CD4-positive, alpha-beta T cell (primary cell): ENCODE measurements at regions of chr1 and their contacts with region 1.

Region 1: DNA sequence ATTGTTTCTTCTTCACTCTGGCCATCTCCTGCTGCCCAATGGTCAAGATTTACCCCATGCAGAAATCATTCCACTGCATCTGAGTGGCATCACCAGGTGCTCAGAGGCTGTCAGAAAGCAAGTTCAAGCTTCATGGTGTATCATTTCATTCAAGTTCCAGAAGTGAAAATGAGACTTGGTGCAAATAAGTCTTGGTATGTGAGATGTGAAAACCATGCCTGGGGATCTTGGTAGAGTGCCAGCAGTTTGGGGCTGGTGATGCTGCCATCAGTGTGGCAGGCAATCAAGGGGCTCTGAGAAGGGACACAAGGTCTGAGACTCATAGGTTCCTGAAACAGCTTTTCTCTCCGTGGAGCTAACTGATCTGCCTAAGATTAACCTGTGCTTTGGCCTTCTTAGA is 52.0 kb downstream of the CD2 start:
- DNase-seq: peak in 11 of 14 experiments; percentile 29 to 79 (median 48)
- ATAC-seq: peak; percentile 27
- H3K4me3 ChIP-seq: peak overlapping the region; percentile 9
- H3K4me3 Mint-ChIP-seq: peak overlapping the region; percentile 64
- H3K27ac ChIP-seq: peak overlapping the region; percentile 11 to 80
- H3K27ac Mint-ChIP-seq: peak overlapping the region; percentile 93
- H3K4me1 ChIP-seq: peaks cover 78% of the 10 kb centered on the region
- H3K4me1 Mint-ChIP-seq: peaks cover 90% of the 10 kb centered on the region
- H3K27me3 ChIP-seq: no peaks in the 10 kb centered on the region
- H3K27me3 Mint-ChIP-seq: no peaks in the 10 kb centered on the region
- CTCF ChIP-seq: no peak

Region 2: GRCh38 chr1:116433275-116434257 is 372.7 kb before region 1 on chr1:
- CTCF ChIA-PET with region 1: no interaction called
- POLR2A ChIA-PET with region 1: no interaction called
- intact Hi-C with region 1: no loop called
- DNase-seq: no peak
- ATAC-seq: no peak
- H3K4me3 ChIP-seq: no peak overlapping the region
- H3K4me3 Mint-ChIP-seq: no peak overlapping the region
- H3K27ac ChIP-seq: no peak overlapping the region
- H3K27ac Mint-ChIP-seq: no peak overlapping the region
- H3K4me1 ChIP-seq: no peaks in the 10 kb centered on the region
- H3K4me1 Mint-ChIP-seq: no peaks in the 10 kb centered on the region
- H3K27me3 ChIP-seq: no peaks in the 10 kb centered on the region
- H3K27me3 Mint-ChIP-seq: no peaks in the 10 kb centered on the region
- CTCF ChIP-seq: no peak

Region 3: GRCh38 chr1:116754198-116754977 is 51.9 kb before region 1 on chr1 and contains the start of gene CD2:
- CTCF ChIA-PET with region 1: interaction called, 3 read pairs
- POLR2A ChIA-PET with region 1: interaction called, 15 read pairs
- intact Hi-C with region 1: no loop called
- DNase-seq: peak in 11 of 14 experiments; percentile 47 to 82 (median 60)
- ATAC-seq: peak; percentile 86
- H3K4me3 ChIP-seq: peak within 1 kb of the TSS; percentile 78
- H3K4me3 Mint-ChIP-seq: peak within 1 kb of the TSS; percentile 97
- H3K27ac ChIP-seq: peak within 1 kb of the TSS; percentile 81 to 82
- H3K27ac Mint-ChIP-seq: peak within 1 kb of the TSS; percentile 99
- H3K4me1 ChIP-seq: peaks cover 19% of the 10 kb centered on the region
- H3K4me1 Mint-ChIP-seq: peaks cover 59% of the 10 kb centered on the region
- H3K27me3 ChIP-seq: no peaks in the 10 kb centered on the region
- H3K27me3 Mint-ChIP-seq: no peaks in the 10 kb centered on the region
- CTCF ChIP-seq: peak; percentile 13
- total RNA-seq, gene CD2: 150 to 151 TPM

Region 4: GRCh38 chr1:116763787-116764465 is 42.3 kb before region 1 on chr1:
- CTCF ChIA-PET with region 1: interaction called, 16 read pairs
- POLR2A ChIA-PET with region 1: interaction called, 290 read pairs
- intact Hi-C with region 1: no loop called
- DNase-seq: peak in 6 of 14 experiments; percentile 20 to 74 (median 52)
- ATAC-seq: peak; percentile 18
- H3K4me3 ChIP-seq: peak overlapping the region; percentile 31
- H3K4me3 Mint-ChIP-seq: peak overlapping the region; percentile 83
- H3K27ac ChIP-seq: peak overlapping the region; percentile 88 to 89
- H3K27ac Mint-ChIP-seq: peak overlapping the region; percentile 99
- H3K4me1 ChIP-seq: peaks cover 96% of the 10 kb centered on the region
- H3K4me1 Mint-ChIP-seq: peaks cover 97% of the 10 kb centered on the region
- H3K27me3 ChIP-seq: no peaks in the 10 kb centered on the region
- H3K27me3 Mint-ChIP-seq: no peaks in the 10 kb centered on the region
- CTCF ChIP-seq: peak; percentile 52

Region 5: GRCh38 chr1:117572546-117572945 is 766.3 kb after region 1 on chr1:
- CTCF ChIA-PET with region 1: no interaction called
- POLR2A ChIA-PET with region 1: no interaction called
- intact Hi-C with region 1: no loop called
- DNase-seq: peak in 12 of 14 experiments; percentile 7 to 53 (median 36)
- ATAC-seq: peak; percentile 77
- H3K4me3 ChIP-seq: no peak overlapping the region
- H3K4me3 Mint-ChIP-seq: peak overlapping the region; percentile 14
- H3K27ac ChIP-seq: no peak overlapping the region
- H3K27ac Mint-ChIP-seq: no peak overlapping the region
- H3K4me1 ChIP-seq: peaks cover 23% of the 10 kb centered on the region
- H3K4me1 Mint-ChIP-seq: peaks cover 30% of the 10 kb centered on the region
- H3K27me3 ChIP-seq: no peaks in the 10 kb centered on the region
- H3K27me3 Mint-ChIP-seq: no peaks in the 10 kb centered on the region
- CTCF ChIP-seq: no peak